ENCODE measurements at regions of chr14 and their contacts with region 1.

Region 1: DNA sequence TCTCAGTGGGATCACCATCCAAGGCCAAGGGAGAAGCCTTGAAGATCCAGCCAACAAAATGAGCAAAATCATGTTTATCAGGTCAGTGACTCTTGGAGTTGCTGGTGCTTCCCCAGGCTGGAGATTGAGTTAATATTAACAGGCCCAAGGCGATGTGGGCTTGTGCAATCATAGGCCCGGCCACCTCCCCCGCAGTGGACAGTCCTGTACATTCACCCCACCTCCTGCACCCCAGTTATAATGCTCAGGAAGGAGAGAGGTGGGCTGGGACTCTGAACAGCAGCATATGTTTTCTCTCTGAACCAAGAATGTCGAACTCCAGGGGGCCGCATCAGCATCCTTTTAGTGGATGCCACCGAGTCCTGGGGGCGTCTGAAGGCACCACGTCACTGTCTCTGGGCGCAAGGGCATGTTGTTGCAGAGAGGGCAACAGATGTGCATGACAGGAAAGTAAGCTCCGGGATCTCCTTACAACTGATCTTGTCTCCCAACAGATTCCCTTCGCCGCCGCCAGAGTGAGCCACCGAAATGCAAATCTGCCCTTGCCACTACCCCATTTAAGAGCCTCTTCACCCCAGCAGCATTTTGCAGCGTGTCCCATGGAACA is 32.2 kb upstream of the SERPINA6 start:
- DNase-seq: peak; percentile 12
- ATAC-seq: no peak
- H3K4me3 ChIP-seq: no peak overlapping the region
- H3K27ac ChIP-seq: no peak overlapping the region
- H3K4me1 ChIP-seq: no peaks in the 10 kb centered on the region
- H3K27me3 ChIP-seq: no peaks in the 10 kb centered on the region
- CTCF ChIP-seq: peak; percentile 28; the same call in 1 of the 2 replicates

Region 2: GRCh38 chr14:94334841-94335240 is 20.5 kb before region 1 on chr14:
- CTCF ChIA-PET with region 1: no interaction called
- POLR2A ChIA-PET with region 1: no interaction called
- intact Hi-C with region 1: no loop called
- DNase-seq: no peak
- ATAC-seq: no peak
- H3K4me3 ChIP-seq: no peak overlapping the region
- H3K27ac ChIP-seq: no peak overlapping the region
- H3K4me1 ChIP-seq: no peaks in the 10 kb centered on the region
- H3K27me3 ChIP-seq: no peaks in the 10 kb centered on the region
- CTCF ChIP-seq: no peak

Region 3: DNA sequence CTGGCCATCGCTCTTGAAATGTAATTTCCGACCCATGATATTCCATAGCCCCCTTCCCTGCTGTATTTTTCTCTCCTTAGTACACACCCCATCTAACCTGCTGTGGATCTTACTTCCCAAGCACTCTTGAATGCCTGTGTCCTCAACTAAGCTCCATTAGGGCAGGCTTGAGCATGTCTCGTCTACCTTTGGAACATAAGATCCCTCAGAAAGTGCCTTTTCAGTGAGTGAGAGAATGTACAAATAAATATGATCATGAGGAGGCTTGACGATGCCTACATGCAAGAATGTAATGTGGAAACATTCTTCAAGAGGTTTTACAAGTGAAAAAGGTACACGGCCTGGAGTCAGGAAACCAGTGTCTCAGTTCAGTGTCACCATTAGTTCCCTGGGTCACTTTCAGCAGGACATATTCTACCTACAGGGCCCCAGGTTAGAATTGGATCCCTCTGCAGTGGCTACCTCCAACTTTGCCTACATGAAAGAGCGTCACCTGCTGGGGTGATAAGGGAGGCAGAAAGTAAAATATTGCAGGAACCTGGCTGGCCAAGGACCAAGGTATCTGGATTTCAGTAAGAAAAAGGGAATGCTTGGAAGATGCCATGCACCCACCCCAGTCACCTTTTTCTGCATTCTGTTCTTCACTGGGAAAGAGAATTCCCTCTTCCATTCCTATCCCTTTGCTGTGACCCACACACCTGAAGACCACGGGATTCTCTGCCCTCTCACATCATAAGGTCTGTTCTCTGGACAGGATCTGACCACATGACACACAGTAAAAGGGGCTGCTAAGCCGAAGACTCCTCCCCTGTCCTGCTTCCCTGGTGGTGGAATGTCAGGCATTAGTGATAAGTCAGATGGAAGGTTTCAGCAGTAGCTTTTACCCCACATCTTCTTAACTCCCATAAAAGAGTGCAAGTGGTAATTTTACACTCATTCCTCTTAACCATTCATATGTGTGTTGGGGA is 57.7 kb after region 1 on chr14:
- CTCF ChIA-PET with region 1: no interaction called
- POLR2A ChIA-PET with region 1: no interaction called
- intact Hi-C with region 1: loop called (anchors 5 kb)
- DNase-seq: peak; percentile 12
- ATAC-seq: no peak
- H3K4me3 ChIP-seq: no peak overlapping the region
- H3K27ac ChIP-seq: no peak overlapping the region
- H3K4me1 ChIP-seq: no peaks in the 10 kb centered on the region
- H3K27me3 ChIP-seq: no peaks in the 10 kb centered on the region
- CTCF ChIP-seq: peak; percentile 44

Region 4: DNA sequence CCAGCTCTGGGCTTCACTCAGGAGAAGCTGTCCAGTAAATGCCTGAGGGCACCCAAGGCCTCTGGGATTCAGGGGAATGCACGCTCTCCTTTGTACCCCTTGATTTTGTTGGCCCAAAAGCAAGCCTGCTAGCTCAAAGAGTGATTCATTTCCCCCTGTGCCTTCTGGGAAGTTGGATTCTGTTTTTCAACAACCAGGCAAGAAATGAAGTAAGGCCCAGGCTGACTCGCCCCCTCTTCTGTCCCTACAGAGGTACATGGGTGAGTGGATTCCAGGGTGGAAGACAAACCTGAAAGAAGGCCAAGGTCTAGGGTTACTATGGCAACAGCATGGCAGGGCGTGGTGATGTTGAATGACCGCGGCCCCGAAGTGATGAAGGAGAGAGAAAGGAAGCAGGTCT is 216.7 kb after region 1 on chr14:
- CTCF ChIA-PET with region 1: no interaction called
- POLR2A ChIA-PET with region 1: no interaction called
- intact Hi-C with region 1: no loop called
- DNase-seq: no peak
- ATAC-seq: no peak
- H3K4me3 ChIP-seq: no peak overlapping the region
- H3K27ac ChIP-seq: no peak overlapping the region
- H3K4me1 ChIP-seq: no peaks in the 10 kb centered on the region
- H3K27me3 ChIP-seq: no peaks in the 10 kb centered on the region
- CTCF ChIP-seq: no peak

Measured in PC-3 (cell line).